ENCODE measurements at regions of chr2 and their contacts with region 1.

Region 1: DNA sequence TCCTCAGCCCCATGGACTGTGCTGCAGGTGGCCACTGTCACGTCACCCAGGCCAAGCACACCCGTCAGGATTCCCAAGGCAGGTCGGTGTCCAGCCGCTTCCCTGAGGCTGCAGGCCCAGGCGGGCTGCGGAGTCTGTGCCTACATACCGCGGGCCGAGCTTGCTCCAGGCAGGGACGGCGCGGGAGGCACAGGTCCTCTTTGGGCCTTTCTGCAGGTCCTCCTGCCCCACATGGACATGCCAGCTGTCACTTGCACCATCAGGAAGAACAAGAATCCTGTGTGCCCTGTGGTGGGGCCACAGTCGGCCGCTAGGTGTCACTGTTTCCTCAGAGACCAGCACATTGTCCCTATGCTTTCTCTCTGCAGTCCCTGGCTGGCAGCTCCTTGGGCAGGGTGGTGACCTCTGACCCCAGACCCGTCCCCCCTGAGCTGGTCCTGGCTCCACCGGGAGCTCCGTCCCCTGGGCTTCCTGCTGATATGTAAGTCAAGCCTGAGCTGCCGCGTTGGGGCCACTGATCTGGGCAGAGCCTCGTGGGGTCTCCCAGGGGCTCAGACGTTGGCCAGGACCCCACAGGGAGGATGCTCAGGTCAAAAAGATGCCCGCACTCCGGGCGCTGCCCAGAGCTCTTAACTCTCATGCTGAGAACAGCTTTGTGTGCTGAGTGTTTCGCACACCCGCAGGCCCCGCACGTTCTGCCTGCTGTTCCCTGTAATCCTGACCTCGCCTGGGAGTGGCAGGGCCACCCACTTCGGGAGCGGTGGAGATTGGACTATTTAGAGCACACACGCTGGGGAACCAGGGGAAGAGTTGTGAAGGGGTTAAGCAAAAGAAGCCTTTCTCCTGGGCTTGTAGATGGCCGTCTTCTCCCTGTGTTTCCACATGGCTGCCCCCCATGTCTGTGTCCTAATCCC is 17.3 kb upstream of the AGXT start:
- DNase-seq: peak; percentile 72 to 90 (median 82)
- ATAC-seq: peak; percentile 97
- H3K4me3 ChIP-seq: no peak overlapping the region
- H3K4me3 Mint-ChIP-seq: no peak overlapping the region
- H3K27ac ChIP-seq: no peak overlapping the region
- H3K27ac Mint-ChIP-seq: no peak overlapping the region
- H3K4me1 ChIP-seq: no peaks in the 10 kb centered on the region
- H3K4me1 Mint-ChIP-seq: no peaks in the 10 kb centered on the region
- H3K27me3 ChIP-seq: no peaks in the 10 kb centered on the region
- H3K27me3 Mint-ChIP-seq: peaks cover 3% of the 10 kb centered on the region
- CTCF ChIP-seq: peak; percentile 88

Region 2: GRCh38 chr2:241659150-241659739 is 807.9 kb after region 1 on chr2:
- CTCF ChIA-PET with region 1: no interaction called
- POLR2A ChIA-PET with region 1: no interaction called
- intact Hi-C with region 1: loop called in 1 of 2 experiments (anchors 2 kb)
- DNase-seq: peak in 8 of 14 experiments; percentile 11 to 62 (median 36)
- ATAC-seq: peak; percentile 51
- H3K4me3 ChIP-seq: no peak overlapping the region
- H3K4me3 Mint-ChIP-seq: no peak overlapping the region
- H3K27ac ChIP-seq: no peak overlapping the region
- H3K27ac Mint-ChIP-seq: no peak overlapping the region
- H3K4me1 ChIP-seq: no peaks in the 10 kb centered on the region
- H3K4me1 Mint-ChIP-seq: no peaks in the 10 kb centered on the region
- H3K27me3 ChIP-seq: no peaks in the 10 kb centered on the region
- H3K27me3 Mint-ChIP-seq: no peaks in the 10 kb centered on the region
- CTCF ChIP-seq: peak; percentile 25

Measured in CD4-positive, alpha-beta T cell (primary cell).